ENCODE measurements at regions of chr3 and their contacts with region 1.

Region 1: DNA sequence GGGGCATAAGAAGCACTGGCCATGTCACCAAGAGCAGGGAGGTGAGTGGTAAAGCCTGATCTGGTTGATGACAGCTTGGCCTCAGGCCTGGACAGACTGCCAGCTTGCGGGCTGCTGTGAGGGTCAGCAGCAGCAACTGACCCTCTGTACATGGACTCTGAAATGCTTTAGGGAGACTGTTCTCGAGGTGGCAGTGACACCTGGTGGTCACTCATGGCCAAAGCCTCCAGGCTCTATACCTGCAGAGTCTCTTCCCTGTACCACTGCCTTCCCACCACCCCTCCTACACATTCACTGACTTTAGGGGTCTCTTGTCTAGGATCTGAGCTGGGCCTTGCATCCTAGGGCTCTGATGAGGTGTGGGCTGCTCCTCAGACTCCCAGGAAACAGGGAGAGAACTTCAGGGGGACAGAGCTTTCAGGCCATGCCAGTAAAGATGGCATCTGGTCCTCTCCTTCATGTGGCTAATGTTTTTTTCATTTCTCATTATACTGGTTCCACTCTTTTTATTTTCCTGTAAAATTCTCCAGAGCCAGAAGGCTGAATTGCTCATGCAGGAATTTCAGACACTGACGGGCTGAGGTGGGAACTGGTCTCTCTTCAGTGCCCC is 17.2 kb upstream of the TIMP4 start:
- DNase-seq: peak; percentile 48
- ATAC-seq: peak; percentile 94
- H3K4me3 ChIP-seq: no peak overlapping the region
- H3K27ac ChIP-seq: peak overlapping the region; percentile 18; the same call in 1 of the 2 replicates
- H3K4me1 ChIP-seq: no peaks in the 10 kb centered on the region
- H3K27me3 ChIP-seq: no peaks in the 10 kb centered on the region
- CTCF ChIP-seq: peak; percentile 83

Region 2: GRCh38 chr3:12246497-12247163 is 70.7 kb after region 1 on chr3:
- CTCF ChIA-PET with region 1: interaction called, 15 read pairs
- POLR2A ChIA-PET with region 1: no interaction called
- in situ Hi-C with region 1: no loop called
- intact Hi-C with region 1: no loop called
- DNase-seq: no peak
- ATAC-seq: no peak
- H3K4me3 ChIP-seq: no peak overlapping the region
- H3K27ac ChIP-seq: no peak overlapping the region
- H3K4me1 ChIP-seq: no peaks in the 10 kb centered on the region
- H3K27me3 ChIP-seq: no peaks in the 10 kb centered on the region
- CTCF ChIP-seq: no peak